CD8-positive, alpha-beta T cell (primary cell): ENCODE measurements at regions of chr11 and their contacts with region 1.

Region 1: GRCh38 chr11:72722050-72722748 is 30.0 kb downstream of the ARAP1 start:
- DNase-seq: peak; percentile 72 to 94 (median 87)
- ATAC-seq: peak; percentile 81
- H3K4me3 ChIP-seq: peak overlapping the region; percentile 77 to 89
- H3K4me3 Mint-ChIP-seq: peak overlapping the region; percentile 98
- H3K27ac ChIP-seq: peak overlapping the region; percentile 80 to 87
- H3K27ac Mint-ChIP-seq: peak overlapping the region; percentile 98
- H3K4me1 ChIP-seq: peaks cover 64% of the 10 kb centered on the region
- H3K4me1 Mint-ChIP-seq: peaks cover 65% of the 10 kb centered on the region
- H3K27me3 ChIP-seq: no peaks in the 10 kb centered on the region
- H3K27me3 Mint-ChIP-seq: no peaks in the 10 kb centered on the region
- CTCF ChIP-seq: no peak

Region 2: DNA sequence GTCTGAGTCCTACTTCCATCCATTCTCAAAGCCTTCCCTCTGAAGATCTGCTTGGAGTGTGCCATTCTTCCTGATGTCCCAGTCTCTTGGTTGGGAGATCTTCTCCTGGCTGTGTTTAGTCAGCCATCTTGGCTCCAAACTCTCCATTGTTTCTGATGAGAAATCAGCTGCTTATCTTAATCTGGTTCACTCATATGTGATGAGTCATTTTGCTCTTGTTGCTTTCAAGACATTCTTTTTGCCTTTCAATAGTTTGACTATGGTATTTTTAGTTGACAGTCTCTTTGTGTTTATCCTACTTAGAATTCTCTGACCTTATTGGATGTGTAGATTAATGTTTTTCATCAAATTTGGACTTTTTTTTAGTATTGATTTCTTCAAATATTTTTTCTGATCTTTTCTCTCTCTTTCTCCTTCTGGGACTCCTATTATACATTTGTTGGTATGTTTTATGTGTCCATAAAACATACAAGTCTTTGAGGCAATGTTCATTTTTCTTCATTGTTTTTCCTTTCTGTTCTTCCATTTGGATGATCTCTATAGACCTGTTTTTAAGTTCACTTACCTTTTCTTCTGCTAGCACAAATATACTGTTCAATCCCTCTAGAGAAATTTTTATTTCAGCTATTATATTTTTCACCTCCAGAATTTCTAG is 210.7 kb before region 1 on chr11:
- CTCF ChIA-PET with region 1: no interaction called
- POLR2A ChIA-PET with region 1: no interaction called
- intact Hi-C with region 1: no loop called
- DNase-seq: no peak
- ATAC-seq: no peak
- H3K4me3 ChIP-seq: no peak overlapping the region
- H3K4me3 Mint-ChIP-seq: no peak overlapping the region
- H3K27ac ChIP-seq: no peak overlapping the region
- H3K27ac Mint-ChIP-seq: no peak overlapping the region
- H3K4me1 ChIP-seq: no peaks in the 10 kb centered on the region
- H3K4me1 Mint-ChIP-seq: no peaks in the 10 kb centered on the region
- H3K27me3 ChIP-seq: no peaks in the 10 kb centered on the region
- H3K27me3 Mint-ChIP-seq: no peaks in the 10 kb centered on the region
- CTCF ChIP-seq: no peak

Region 3: GRCh38 chr11:72683782-72684200 is 38.4 kb before region 1 on chr11:
- CTCF ChIA-PET with region 1: interaction called, 7 read pairs
- POLR2A ChIA-PET with region 1: no interaction called
- intact Hi-C with region 1: loop called in 1 of 2 experiments (anchors 2 kb)
- DNase-seq: peak; percentile 48 to 80 (median 66)
- ATAC-seq: peak; percentile 82
- H3K4me3 ChIP-seq: no peak overlapping the region
- H3K4me3 Mint-ChIP-seq: no peak overlapping the region
- H3K27ac ChIP-seq: no peak overlapping the region
- H3K27ac Mint-ChIP-seq: peak overlapping the region; percentile 27
- H3K4me1 ChIP-seq: peaks cover 6% of the 10 kb centered on the region
- H3K4me1 Mint-ChIP-seq: peaks cover 15% of the 10 kb centered on the region
- H3K27me3 ChIP-seq: no peaks in the 10 kb centered on the region
- H3K27me3 Mint-ChIP-seq: no peaks in the 10 kb centered on the region
- CTCF ChIP-seq: peak; percentile 90

Region 4: DNA sequence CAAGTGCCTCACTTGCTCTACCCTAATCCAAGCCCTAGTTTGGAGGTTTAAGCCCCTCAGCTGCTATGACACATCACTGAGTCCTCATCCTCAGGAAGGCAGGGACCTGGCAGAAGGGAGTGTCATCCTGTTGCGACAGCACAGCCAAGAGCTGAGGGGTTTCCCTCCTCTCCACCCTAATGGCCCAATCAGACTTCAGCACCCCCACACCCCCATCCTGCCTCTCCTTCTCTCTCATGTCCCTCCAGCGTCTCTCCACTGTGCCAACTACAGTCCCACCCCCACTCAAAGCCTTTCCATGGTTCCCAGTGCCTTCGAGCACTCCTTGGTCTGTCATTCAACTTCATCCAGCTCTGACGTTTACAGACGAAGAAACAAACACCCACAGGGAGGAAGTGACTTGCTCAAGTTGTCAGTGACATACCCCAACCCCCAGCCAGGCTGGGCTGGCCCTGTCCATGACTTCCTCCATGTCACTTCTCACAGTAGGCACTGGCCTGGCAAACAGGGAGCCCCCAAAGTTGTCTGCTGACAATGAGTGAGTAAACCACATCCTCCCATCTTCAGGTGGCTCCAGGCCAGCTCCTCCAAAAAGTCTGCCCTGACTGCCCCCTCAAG is 14.4 kb after region 1 on chr11:
- CTCF ChIA-PET with region 1: interaction called, 36 read pairs
- POLR2A ChIA-PET with region 1: interaction called, 4 read pairs
- intact Hi-C with region 1: loop called (anchors 1 kb)
- DNase-seq: peak; percentile 50 to 95 (median 75)
- ATAC-seq: peak; percentile 89
- H3K4me3 ChIP-seq: no peak overlapping the region
- H3K4me3 Mint-ChIP-seq: peak overlapping the region; percentile 47
- H3K27ac ChIP-seq: peak overlapping the region; percentile 60 to 96
- H3K27ac Mint-ChIP-seq: peak overlapping the region; percentile 99
- H3K4me1 ChIP-seq: peaks cover 53% of the 10 kb centered on the region
- H3K4me1 Mint-ChIP-seq: peaks cover 56% of the 10 kb centered on the region
- H3K27me3 ChIP-seq: no peaks in the 10 kb centered on the region
- H3K27me3 Mint-ChIP-seq: no peaks in the 10 kb centered on the region
- CTCF ChIP-seq: no peak

Region 5: GRCh38 chr11:72752088-72752914 is 30.1 kb after region 1 on chr11 and contains the start of gene ARAP1:
- CTCF ChIA-PET with region 1: interaction called, 7 read pairs
- POLR2A ChIA-PET with region 1: interaction called, 4 read pairs
- intact Hi-C with region 1: loop called (anchors 1 kb)
- DNase-seq: peak; percentile 53 to 91 (median 80)
- ATAC-seq: peak; percentile 88
- H3K4me3 ChIP-seq: peak within 1 kb of the TSS; percentile 92 to 95
- H3K4me3 Mint-ChIP-seq: peak within 1 kb of the TSS; percentile 95
- H3K27ac ChIP-seq: peak within 1 kb of the TSS; percentile 68 to 70
- H3K27ac Mint-ChIP-seq: peak within 1 kb of the TSS; percentile 94
- H3K4me1 ChIP-seq: peaks cover 40% of the 10 kb centered on the region
- H3K4me1 Mint-ChIP-seq: peaks cover 45% of the 10 kb centered on the region
- H3K27me3 ChIP-seq: no peaks in the 10 kb centered on the region
- H3K27me3 Mint-ChIP-seq: no peaks in the 10 kb centered on the region
- CTCF ChIP-seq: no peak
- total RNA-seq, gene ARAP1: 93.5 to 95.2 TPM

Region 6: DNA sequence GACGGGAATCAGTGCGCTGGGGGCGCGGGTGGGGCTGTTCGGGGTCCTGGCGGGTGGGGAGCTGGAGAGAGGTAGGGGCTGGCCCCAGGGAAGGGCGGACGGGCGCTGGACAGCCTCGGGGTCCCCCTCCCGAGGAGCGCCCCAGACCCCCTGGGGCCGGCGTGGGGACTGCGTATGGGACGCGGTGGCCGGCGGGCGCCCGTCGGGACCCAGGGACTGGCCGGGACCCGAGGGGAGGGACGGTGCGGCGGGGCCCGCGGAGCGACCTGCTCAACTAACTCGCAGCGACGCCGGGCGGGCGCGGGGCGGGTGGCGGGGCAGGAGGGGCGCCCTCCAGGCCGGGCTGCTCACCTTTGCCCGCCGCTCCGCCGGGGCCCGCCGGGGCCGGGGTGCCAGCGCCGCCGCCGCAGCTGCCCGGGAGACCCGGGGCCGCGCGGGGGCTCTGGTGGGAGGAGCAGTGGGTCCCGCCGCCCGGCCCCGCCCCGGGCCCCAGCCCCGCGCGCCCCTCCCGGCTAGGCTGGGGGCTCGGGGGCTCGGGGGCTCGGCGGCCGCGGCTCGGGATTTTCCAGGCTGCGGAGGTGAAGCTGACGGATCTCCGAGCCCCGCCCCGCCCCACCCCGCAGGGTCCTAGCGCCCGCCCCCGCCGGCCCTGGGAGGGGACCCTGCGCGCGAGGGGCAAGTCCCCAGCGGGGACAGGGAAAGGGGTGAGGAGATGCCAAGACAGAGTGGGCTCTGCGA is 59.3 kb after region 1 on chr11:
- CTCF ChIA-PET with region 1: interaction called, 157 read pairs
- POLR2A ChIA-PET with region 1: interaction called, 4 read pairs
- intact Hi-C with region 1: loop called (anchors 1 kb)
- DNase-seq: peak; percentile 34 to 87 (median 66)
- ATAC-seq: peak; percentile 86
- H3K4me3 ChIP-seq: peak overlapping the region; percentile 42 to 59
- H3K4me3 Mint-ChIP-seq: peak overlapping the region; percentile 72
- H3K27ac ChIP-seq: no peak overlapping the region
- H3K27ac Mint-ChIP-seq: peak overlapping the region; percentile 50
- H3K4me1 ChIP-seq: peaks cover 16% of the 10 kb centered on the region
- H3K4me1 Mint-ChIP-seq: peaks cover 29% of the 10 kb centered on the region
- H3K27me3 ChIP-seq: no peaks in the 10 kb centered on the region
- H3K27me3 Mint-ChIP-seq: no peaks in the 10 kb centered on the region
- CTCF ChIP-seq: no peak

Region 7: GRCh38 chr11:72814286-72815109 is 92.3 kb after region 1 on chr11 and contains the start of gene ATG16L2:
- CTCF ChIA-PET with region 1: interaction called, 7 read pairs
- POLR2A ChIA-PET with region 1: interaction called, 8 read pairs
- intact Hi-C with region 1: loop called (anchors 1 kb)
- DNase-seq: peak; percentile 83 to 96 (median 88)
- ATAC-seq: peak; percentile 78
- H3K4me3 ChIP-seq: peak within 1 kb of the TSS; percentile 97 to 98
- H3K4me3 Mint-ChIP-seq: peak within 1 kb of the TSS; percentile 99
- H3K27ac ChIP-seq: peak within 1 kb of the TSS; percentile 99 to 100
- H3K27ac Mint-ChIP-seq: peak within 1 kb of the TSS; percentile 99
- H3K4me1 ChIP-seq: peaks cover 26% of the 10 kb centered on the region
- H3K4me1 Mint-ChIP-seq: peaks cover 48% of the 10 kb centered on the region
- H3K27me3 ChIP-seq: no peaks in the 10 kb centered on the region
- H3K27me3 Mint-ChIP-seq: no peaks in the 10 kb centered on the region
- CTCF ChIP-seq: peak; percentile 20
- total RNA-seq, gene ATG16L2: 45.7 to 52.8 TPM

Region 8: GRCh38 chr11:72848846-72849466 is 126.8 kb after region 1 on chr11:
- CTCF ChIA-PET with region 1: interaction called, 10 read pairs
- POLR2A ChIA-PET with region 1: no interaction called
- intact Hi-C with region 1: loop called (anchors 1 kb)
- DNase-seq: peak in 5 of 9 experiments; percentile 29 to 67 (median 46)
- ATAC-seq: peak; percentile 71
- H3K4me3 ChIP-seq: no peak overlapping the region
- H3K4me3 Mint-ChIP-seq: no peak overlapping the region
- H3K27ac ChIP-seq: no peak overlapping the region
- H3K27ac Mint-ChIP-seq: no peak overlapping the region
- H3K4me1 ChIP-seq: no peaks in the 10 kb centered on the region
- H3K4me1 Mint-ChIP-seq: peaks cover 5% of the 10 kb centered on the region
- H3K27me3 ChIP-seq: no peaks in the 10 kb centered on the region
- H3K27me3 Mint-ChIP-seq: no peaks in the 10 kb centered on the region
- CTCF ChIP-seq: peak; percentile 61